ENCODE measurements at regions of chrX and their contacts with region 1.

Region 1: DNA sequence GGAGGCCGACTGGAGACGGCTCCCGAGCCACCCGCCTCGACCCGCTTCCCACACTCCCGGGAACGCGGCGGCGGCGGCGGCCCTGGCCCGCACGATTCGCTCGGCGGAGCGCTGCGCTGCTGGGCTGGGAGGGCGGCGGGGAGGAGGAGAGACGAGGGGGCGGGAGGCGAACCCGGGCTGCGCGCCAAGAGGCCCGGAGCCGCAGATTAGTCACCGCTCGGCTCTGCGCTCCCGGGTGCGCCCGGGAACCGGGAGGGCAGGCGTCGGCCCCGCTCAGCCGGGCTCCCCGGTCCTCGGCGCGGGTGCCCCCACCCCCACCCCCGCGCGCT is 11.2 kb upstream of the BCOR start:
- DNase-seq: peak; percentile 62 to 85
- ATAC-seq: peak; percentile 55 to 70
- H3K4me3 ChIP-seq: peak overlapping the region; percentile 67
- H3K27ac ChIP-seq: peak overlapping the region; percentile 99 to 100
- H3K4me1 ChIP-seq: peaks cover 23% of the 10 kb centered on the region
- CTCF ChIP-seq: no peak
- EP300 ChIP-seq: no peak
- POLR2A ChIP-seq: peak; percentile 11; the same call in 1 of the 2 replicates
- RAD21 ChIP-seq: no peak

Region 2: DNA sequence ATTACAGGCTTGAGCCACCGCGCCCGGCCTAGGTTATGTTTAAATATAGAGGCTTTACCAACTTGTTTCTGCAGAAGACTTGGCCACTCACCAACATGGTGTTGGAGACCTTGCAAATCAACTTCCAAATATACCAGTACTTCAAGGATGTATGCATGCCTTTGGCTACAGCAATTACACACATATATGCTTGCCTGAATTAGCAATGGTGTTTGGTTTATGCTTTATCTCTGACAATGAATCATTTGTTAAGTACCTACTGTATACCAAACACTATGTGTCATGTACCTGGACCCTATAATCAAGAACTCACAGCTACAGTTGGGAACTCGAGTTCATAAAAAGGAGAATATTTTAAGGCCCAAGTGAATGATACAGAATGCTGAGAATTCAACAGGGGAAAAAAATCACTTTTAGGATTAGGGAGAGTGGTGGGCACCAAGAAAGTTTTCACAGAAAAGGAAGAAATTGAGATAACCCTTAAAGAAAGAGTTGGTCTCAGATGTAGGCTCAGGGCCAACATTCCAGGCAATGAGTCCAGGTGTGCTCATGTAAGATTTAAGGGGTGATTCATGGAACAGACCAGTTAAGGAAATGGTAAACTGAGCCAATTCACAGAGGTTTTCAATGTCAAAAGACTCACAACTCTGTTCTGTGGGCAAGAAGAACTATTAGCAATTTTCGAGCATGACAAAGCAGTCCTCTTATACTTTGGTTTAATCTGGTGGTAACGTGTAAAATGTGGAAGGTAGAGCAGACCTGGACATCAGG is 110.1 kb before region 1 on chrX:
- CTCF ChIA-PET with region 1: no interaction called
- POLR2A ChIA-PET with region 1: no interaction called
- DNase-seq: no peak
- ATAC-seq: no peak
- H3K4me3 ChIP-seq: no peak overlapping the region
- H3K27ac ChIP-seq: no peak overlapping the region
- H3K4me1 ChIP-seq: peaks cover 3% of the 10 kb centered on the region; the same call in 1 of the 3 replicates
- CTCF ChIP-seq: no peak
- EP300 ChIP-seq: no peak
- POLR2A ChIP-seq: no peak
- RAD21 ChIP-seq: no peak

Region 3: GRCh38 chrX:40013266-40014195 is 95.4 kb before region 1 on chrX:
- CTCF ChIA-PET with region 1: no interaction called
- POLR2A ChIA-PET with region 1: interaction called, 11 read pairs
- DNase-seq: peak; percentile 28 to 67
- ATAC-seq: peak; percentile 63 to 82
- H3K4me3 ChIP-seq: peak overlapping the region; percentile 88
- H3K27ac ChIP-seq: peak overlapping the region; percentile 96 to 98
- H3K4me1 ChIP-seq: peaks cover 7% of the 10 kb centered on the region
- CTCF ChIP-seq: no peak
- EP300 ChIP-seq: no peak
- POLR2A ChIP-seq: peak; percentile 29
- RAD21 ChIP-seq: no peak

Region 4: GRCh38 chrX:40097497-40098263 is 11.2 kb before region 1 on chrX and contains the start of gene BCOR:
- CTCF ChIA-PET with region 1: interaction called, 3 read pairs
- POLR2A ChIA-PET with region 1: interaction called, 27 read pairs
- DNase-seq: peak; percentile 34 to 80
- ATAC-seq: peak; percentile 56 to 62
- H3K4me3 ChIP-seq: peak within 1 kb of the TSS; percentile 84
- H3K27ac ChIP-seq: peak within 1 kb of the TSS; percentile 98
- H3K4me1 ChIP-seq: peaks cover 25% of the 10 kb centered on the region
- CTCF ChIP-seq: no peak
- EP300 ChIP-seq: no peak
- POLR2A ChIP-seq: peak; percentile 98
- RAD21 ChIP-seq: no peak; a peak in 1 of 5 replicates
- polyA plus RNA-seq, gene BCOR: 12.2 and 21.3 TPM in 2 replicates

Region 5: GRCh38 chrX:40153335-40154249 is 44.7 kb after region 1 on chrX:
- CTCF ChIA-PET with region 1: interaction called, 3 read pairs
- POLR2A ChIA-PET with region 1: interaction called, 35 read pairs
- DNase-seq: peak; percentile 35 to 41
- ATAC-seq: peak; percentile 10 to 28; a peak in 5 of 6 replicates
- H3K4me3 ChIP-seq: peak overlapping the region; percentile 64
- H3K27ac ChIP-seq: peak overlapping the region; percentile 98 to 99
- H3K4me1 ChIP-seq: peaks cover 19% of the 10 kb centered on the region
- CTCF ChIP-seq: peak; percentile 14; the same call in 1 of the 3 replicates
- EP300 ChIP-seq: no peak
- POLR2A ChIP-seq: peak; percentile 21; the same call in 1 of the 2 replicates
- RAD21 ChIP-seq: 0 out of 5 replicates have a peak, but pooled peaks of 1 of the 2 experiments have one; percentile 5

Region 6: DNA sequence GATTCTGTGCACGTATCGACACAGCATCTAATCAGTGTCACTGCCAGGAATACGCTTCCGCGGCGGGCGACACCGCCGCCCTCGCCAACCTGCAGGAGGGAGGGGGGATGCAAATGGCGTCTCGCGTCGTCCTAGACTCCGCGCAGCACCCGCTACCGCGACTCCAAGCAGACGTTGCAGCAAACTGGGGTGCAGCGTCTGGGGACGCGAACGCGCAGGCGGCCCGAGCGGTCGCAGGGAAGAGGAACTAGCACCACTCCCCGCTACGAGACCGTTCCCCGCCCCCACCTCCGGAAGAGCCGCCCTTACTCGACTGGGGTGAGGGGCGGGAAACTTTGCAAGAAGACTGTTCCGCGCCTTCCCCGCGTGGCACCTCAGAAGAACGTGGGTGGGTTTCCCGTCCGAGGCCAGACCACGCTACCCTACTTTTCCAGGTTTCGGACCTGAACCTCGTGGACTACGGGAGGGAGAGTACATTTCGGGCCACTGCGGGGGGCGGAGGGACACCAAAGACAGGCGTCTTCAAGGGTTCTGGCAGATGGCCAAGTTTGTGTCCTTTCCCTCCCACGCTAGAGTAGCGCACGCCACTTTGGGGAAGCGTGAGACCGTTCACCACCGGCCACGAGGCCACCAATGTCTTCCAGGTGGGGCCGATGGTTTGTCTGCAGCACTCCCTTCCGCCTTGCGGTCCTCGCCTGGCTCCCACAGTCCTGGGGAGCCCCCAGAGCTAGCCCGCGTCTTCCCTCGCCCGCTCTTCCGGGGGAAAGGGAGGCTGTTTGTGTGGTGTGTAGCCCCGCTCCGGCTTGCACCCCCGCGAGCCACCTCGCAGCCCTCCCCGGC is 66.8 kb after region 1 on chrX:
- CTCF ChIA-PET with region 1: no interaction called
- POLR2A ChIA-PET with region 1: interaction called, 12 read pairs
- DNase-seq: peak; percentile 13 to 60
- ATAC-seq: peak; percentile 48 to 66
- H3K4me3 ChIP-seq: peak overlapping the region; percentile 58
- H3K27ac ChIP-seq: peak overlapping the region; percentile 90 to 96
- H3K4me1 ChIP-seq: peaks cover 7% of the 10 kb centered on the region; the same call in 2 of the 3 replicates
- CTCF ChIP-seq: no peak
- EP300 ChIP-seq: no peak
- POLR2A ChIP-seq: no peak; the same call in 1 of the 2 replicates
- RAD21 ChIP-seq: no peak